IMR-90 (cell line): ENCODE measurements at regions of chr15 and their contacts with region 1.

Region 1: GRCh38 chr15:56950979-56951378 is 32.5 kb downstream of the TCF12 start:
- DNase-seq: no peak
- ATAC-seq: no peak
- H3K4me3 ChIP-seq: no peak overlapping the region
- H3K27ac ChIP-seq: no peak overlapping the region
- H3K4me1 ChIP-seq: peaks cover 5% of the 10 kb centered on the region
- H3K27me3 ChIP-seq: no peaks in the 10 kb centered on the region
- CTCF ChIP-seq: no peak
- POLR2A ChIP-seq: no peak
- RAD21 ChIP-seq: no peak

Region 2: GRCh38 chr15:56817321-56818080 is 133.5 kb before region 1 on chr15:
- CTCF ChIA-PET with region 1: no interaction called
- POLR2A ChIA-PET with region 1: no interaction called
- dilution Hi-C with region 1: no loop called
- in situ Hi-C with region 1: no loop called
- intact Hi-C with region 1: no loop called
- DNase-seq: peak; percentile 65
- ATAC-seq: peak; percentile 19; the same call in 1 of the 2 replicates
- H3K4me3 ChIP-seq: no peak overlapping the region
- H3K27ac ChIP-seq: no peak overlapping the region
- H3K4me1 ChIP-seq: peaks cover 8% of the 10 kb centered on the region
- H3K27me3 ChIP-seq: no peaks in the 10 kb centered on the region
- CTCF ChIP-seq: no peak
- POLR2A ChIP-seq: no peak
- RAD21 ChIP-seq: no peak

Region 3: DNA sequence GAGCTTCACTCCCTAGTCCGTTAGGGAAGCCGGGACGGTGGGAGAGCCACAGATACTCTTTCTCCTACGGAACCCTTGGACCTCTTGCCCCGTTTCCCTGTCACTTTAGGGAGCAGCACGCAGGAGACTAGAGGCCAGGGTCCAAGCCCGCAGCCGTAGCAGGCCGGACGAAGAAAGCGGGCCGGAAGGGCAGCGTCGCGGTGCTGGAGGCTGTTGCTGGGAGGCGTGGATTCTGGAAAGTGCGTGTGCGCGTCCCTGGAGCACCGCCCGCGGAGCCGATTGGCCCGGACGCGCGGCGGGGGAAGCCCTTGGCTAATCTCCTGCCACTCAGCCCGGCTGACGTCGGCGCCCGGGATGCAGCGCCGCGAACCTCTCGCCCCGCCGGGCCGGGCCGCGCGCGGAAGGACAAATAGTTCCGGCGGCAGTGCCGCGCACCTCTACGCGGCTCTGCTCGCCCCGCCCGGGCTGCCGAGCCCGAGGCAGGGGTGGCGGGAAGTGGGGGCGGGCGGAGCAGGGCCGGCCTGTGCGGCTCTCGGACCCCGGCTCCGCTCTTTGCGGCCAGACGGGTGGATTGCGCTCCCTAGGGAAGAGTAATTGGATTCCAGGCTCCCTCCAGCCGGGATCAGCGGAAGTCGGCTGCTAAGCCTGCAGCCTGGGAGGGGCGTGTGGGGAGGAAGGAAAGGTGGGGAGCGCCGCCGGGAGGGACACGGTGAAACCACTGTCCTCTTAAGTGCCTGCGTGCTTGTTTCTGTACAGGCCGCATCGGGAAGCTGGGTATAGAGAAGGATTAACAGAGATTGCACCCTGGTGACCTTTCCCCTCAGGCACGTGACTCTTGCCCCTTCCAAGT is 63.8 kb before region 1 on chr15:
- CTCF ChIA-PET with region 1: no interaction called
- POLR2A ChIA-PET with region 1: no interaction called
- dilution Hi-C with region 1: no loop called
- in situ Hi-C with region 1: no loop called
- intact Hi-C with region 1: no loop called
- DNase-seq: peak; percentile 95
- ATAC-seq: peak; percentile 97
- H3K4me3 ChIP-seq: peak overlapping the region; percentile 58
- H3K27ac ChIP-seq: peak overlapping the region; percentile 91
- H3K4me1 ChIP-seq: peaks cover 6% of the 10 kb centered on the region; the same call in 1 of the 2 replicates
- H3K27me3 ChIP-seq: no peaks in the 10 kb centered on the region
- CTCF ChIP-seq: 0 out of 2 replicates have a peak, but pooled peaks have one; percentile 19
- POLR2A ChIP-seq: peak; percentile 83
- RAD21 ChIP-seq: peak; percentile 10; the same call in 1 of the 2 replicates

Region 4: GRCh38 chr15:56933420-56934210 is 17.4 kb before region 1 on chr15:
- CTCF ChIA-PET with region 1: no interaction called
- POLR2A ChIA-PET with region 1: no interaction called
- dilution Hi-C with region 1: no loop called
- in situ Hi-C with region 1: no loop called
- intact Hi-C with region 1: loop called (anchors 1 kb)
- DNase-seq: no peak
- ATAC-seq: no peak
- H3K4me3 ChIP-seq: no peak overlapping the region
- H3K27ac ChIP-seq: no peak overlapping the region
- H3K4me1 ChIP-seq: peaks cover 10% of the 10 kb centered on the region
- H3K27me3 ChIP-seq: no peaks in the 10 kb centered on the region
- CTCF ChIP-seq: no peak
- POLR2A ChIP-seq: no peak
- RAD21 ChIP-seq: no peak

Region 5: DNA sequence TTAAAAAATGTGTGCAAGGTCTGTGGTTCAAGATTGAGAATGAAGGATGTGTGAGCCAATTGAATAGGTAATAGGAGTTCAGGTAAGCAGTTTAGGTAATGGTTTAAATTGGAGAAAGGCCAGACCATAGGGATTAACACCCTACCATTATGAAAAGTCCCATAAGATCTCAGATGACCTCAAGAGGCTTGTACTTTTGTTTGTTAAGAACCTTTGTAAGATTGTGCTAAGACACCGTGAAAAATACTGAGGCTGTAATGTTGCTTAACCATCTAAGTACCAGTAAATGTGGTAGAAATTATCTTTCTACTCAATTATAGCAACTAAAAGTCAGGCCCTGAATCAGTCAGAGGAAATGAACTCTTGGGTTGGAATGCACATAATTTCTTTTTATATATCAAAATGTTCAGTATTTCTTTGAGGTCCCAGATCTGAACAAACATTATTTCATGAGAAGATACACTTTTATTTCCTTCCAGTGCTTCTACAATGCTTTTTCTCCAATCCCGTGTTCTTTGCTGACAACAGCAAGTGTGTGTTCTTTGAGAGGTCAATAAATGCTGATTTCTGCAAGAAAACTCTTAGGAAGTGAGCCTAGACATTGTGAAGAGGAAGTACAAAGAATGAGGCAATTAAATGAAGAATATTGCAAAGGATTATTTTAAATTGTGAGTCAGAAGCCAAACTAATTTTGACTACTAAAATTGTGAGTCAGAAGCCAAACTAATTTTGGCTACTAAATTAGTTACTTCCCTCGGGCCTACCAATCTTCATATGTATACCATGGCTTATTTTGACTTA is 33.9 kb after region 1 on chr15:
- CTCF ChIA-PET with region 1: interaction called, 4 read pairs
- POLR2A ChIA-PET with region 1: no interaction called
- dilution Hi-C with region 1: no loop called
- in situ Hi-C with region 1: no loop called
- intact Hi-C with region 1: loop called (anchors 5 kb)
- DNase-seq: peak; percentile 48
- ATAC-seq: peak; percentile 33; the same call in 1 of the 2 replicates
- H3K4me3 ChIP-seq: no peak overlapping the region
- H3K27ac ChIP-seq: no peak overlapping the region
- H3K4me1 ChIP-seq: peaks cover 18% of the 10 kb centered on the region
- H3K27me3 ChIP-seq: no peaks in the 10 kb centered on the region
- CTCF ChIP-seq: no peak
- POLR2A ChIP-seq: no peak
- RAD21 ChIP-seq: no peak

Region 6: DNA sequence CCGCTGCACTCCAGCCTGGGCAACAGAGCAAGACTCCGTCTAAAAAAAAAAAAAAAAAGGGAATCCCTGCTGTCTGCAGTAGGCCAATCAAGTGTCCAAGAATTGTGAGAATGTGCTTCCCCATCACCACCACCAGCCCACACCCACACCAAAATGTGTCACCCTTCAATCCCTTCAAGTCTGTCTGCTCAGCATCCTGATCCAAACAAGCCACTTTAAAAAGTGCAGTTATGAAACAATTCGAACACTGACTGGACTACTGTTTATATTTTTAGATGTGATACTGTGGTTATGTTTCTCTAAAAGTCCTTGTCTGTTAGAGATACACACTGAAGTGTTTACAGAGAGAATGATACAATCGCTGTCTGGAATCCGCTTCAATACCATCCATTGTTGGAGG is 347.2 kb after region 1 on chr15:
- CTCF ChIA-PET with region 1: no interaction called
- POLR2A ChIA-PET with region 1: no interaction called
- dilution Hi-C with region 1: no loop called
- in situ Hi-C with region 1: no loop called
- intact Hi-C with region 1: no loop called
- DNase-seq: peak; percentile 68
- ATAC-seq: peak; percentile 70
- H3K4me3 ChIP-seq: no peak overlapping the region
- H3K27ac ChIP-seq: no peak overlapping the region
- H3K4me1 ChIP-seq: peaks cover 17% of the 10 kb centered on the region
- H3K27me3 ChIP-seq: no peaks in the 10 kb centered on the region
- CTCF ChIP-seq: no peak
- POLR2A ChIP-seq: no peak
- RAD21 ChIP-seq: no peak